ENCODE measurements at regions of chr5 and their contacts with region 1.

Region 1: GRCh38 chr5:81301271-81302015 is at the start of gene ZCCHC9:
- DNase-seq: peak; percentile 93
- ATAC-seq: peak; percentile 98
- H3K4me3 Mint-ChIP-seq: peak within 1 kb of the TSS; percentile 97
- H3K27ac Mint-ChIP-seq: peak within 1 kb of the TSS; percentile 99
- H3K4me1 Mint-ChIP-seq: peaks cover 24% of the 10 kb centered on the region
- H3K27me3 Mint-ChIP-seq: no peaks in the 10 kb centered on the region
- total RNA-seq, gene ZCCHC9: 31.8 TPM

Region 2: DNA sequence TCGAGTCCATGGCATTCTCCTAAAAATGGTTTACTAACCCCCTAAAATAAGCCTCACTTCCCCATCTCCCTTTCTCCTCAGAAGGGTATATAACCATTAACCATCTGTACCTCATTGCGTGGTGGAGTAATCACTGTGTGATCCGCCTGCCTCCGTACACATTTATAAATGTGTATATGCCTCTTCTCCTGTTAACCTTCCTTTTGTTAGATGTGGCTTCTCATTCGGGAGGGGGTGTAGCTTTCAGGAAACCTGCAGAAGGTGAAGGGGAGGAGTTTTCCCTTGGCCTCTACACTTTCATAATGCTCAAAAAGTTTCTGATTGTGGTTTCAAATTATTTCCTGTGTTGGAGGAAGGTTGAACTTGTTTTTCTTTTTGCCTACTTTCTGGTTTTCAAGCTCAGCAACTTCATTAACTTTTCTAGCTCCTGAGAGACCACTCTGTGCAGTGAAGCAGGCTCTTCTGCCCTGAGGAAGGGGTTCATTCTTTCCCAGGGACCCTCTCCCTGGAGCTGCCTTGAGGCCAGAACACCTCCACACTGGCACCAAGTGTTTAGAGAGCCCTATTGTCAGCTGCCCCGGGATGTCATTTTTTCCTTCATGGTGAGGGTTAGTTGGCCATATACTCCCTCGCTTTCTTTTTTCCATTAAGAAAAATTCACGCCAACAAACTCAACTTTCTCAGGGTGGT is 294.4 kb before region 1 on chr5:
- POLR2A ChIA-PET with region 1: interaction called, 11 read pairs
- DNase-seq: no peak
- ATAC-seq: peak; percentile 83
- H3K4me3 Mint-ChIP-seq: peak overlapping the region; percentile 87
- H3K27ac Mint-ChIP-seq: peak overlapping the region; percentile 93
- H3K4me1 Mint-ChIP-seq: peaks cover 50% of the 10 kb centered on the region
- H3K27me3 Mint-ChIP-seq: no peaks in the 10 kb centered on the region

Region 3: DNA sequence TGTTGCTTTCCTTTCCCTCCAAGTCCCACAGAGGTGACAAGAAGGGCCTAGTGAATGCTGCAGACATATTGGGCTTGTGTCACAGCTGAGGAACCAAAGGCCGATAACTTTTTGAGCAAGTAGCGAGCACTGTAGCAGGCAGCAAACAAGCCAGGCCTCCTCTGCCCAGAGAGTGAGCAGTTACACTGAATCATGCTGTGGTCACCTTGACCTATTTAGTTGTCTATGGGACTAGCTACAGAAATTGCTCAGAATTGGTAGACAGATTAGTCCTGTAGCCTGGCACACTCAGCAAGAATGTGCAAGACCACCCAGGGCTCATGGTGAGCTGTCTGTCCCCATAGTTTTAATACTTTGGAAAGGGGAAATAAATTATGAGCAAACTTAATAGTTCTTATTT is 25.1 kb after region 1 on chr5:
- POLR2A ChIA-PET with region 1: no interaction called
- DNase-seq: no peak
- ATAC-seq: no peak
- H3K4me3 Mint-ChIP-seq: no peak overlapping the region
- H3K27ac Mint-ChIP-seq: no peak overlapping the region
- H3K4me1 Mint-ChIP-seq: no peaks in the 10 kb centered on the region
- H3K27me3 Mint-ChIP-seq: peaks cover 7% of the 10 kb centered on the region